CD8-positive, alpha-beta T cell (primary cell): ENCODE measurements at regions of chr18 and their contacts with region 1.

Region 1: DNA sequence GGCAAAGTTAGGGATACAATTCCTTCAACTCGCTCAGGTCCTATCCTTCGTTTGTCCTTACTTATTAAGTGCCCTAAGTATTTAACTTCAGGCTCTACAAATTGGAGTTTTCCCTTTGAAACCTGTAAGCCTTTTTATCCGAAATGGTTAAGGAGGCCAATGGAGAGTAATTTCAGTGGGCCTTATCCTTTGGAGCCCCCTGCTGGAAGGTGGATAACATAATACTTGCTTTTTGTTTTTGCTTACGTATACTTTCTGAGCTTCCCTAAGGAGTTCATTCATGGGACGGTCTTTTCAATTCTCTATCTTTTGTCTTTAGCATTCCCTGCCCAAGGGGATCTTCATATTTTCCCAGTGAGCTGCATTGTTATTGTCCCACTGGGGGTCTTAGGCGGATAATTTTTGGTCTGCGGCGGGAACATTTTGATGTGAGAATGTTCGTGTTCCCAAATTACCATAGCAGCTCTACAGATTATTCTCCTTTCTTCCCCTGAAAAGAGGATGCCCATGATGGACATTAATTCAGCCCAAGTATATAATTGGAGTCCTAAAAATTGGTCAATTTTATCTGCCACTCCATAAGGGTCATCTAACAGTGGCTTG is 34.4 kb upstream of the TRAPPC8 start:
- DNase-seq: peak in 5 of 9 experiments; percentile 15 to 65 (median 41)
- ATAC-seq: no peak
- H3K4me3 ChIP-seq: no peak overlapping the region
- H3K4me3 Mint-ChIP-seq: no peak overlapping the region
- H3K27ac ChIP-seq: no peak overlapping the region
- H3K27ac Mint-ChIP-seq: no peak overlapping the region
- H3K4me1 ChIP-seq: no peaks in the 10 kb centered on the region
- H3K4me1 Mint-ChIP-seq: peaks cover 1% of the 10 kb centered on the region
- H3K27me3 ChIP-seq: no peaks in the 10 kb centered on the region
- H3K27me3 Mint-ChIP-seq: no peaks in the 10 kb centered on the region
- CTCF ChIP-seq: peak; percentile 62

Region 2: DNA sequence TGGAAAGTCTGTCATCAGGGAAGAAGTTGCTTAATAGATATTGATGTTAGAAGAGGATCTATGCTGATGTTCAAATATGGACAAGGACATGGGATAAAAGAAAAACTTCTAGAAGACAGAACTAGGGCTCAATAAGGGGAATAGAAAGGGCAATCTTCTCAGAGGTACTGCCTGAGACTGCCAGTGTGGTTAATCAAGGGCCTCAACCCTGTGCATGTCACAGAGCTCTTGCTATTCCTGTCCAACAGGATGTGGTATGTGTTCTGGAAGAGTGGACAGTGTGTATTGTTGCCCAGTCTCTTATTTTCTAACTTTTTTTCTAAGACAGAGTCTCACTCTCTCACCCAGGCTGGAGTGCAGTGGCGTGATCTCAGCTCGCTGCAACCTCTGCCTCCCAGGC is 13.5 kb after region 1 on chr18:
- CTCF ChIA-PET with region 1: interaction called, 10 read pairs
- POLR2A ChIA-PET with region 1: no interaction called
- intact Hi-C with region 1: no loop called
- DNase-seq: no peak
- ATAC-seq: no peak
- H3K4me3 ChIP-seq: no peak overlapping the region
- H3K4me3 Mint-ChIP-seq: no peak overlapping the region
- H3K27ac ChIP-seq: no peak overlapping the region
- H3K27ac Mint-ChIP-seq: no peak overlapping the region
- H3K4me1 ChIP-seq: no peaks in the 10 kb centered on the region
- H3K4me1 Mint-ChIP-seq: no peaks in the 10 kb centered on the region
- H3K27me3 ChIP-seq: no peaks in the 10 kb centered on the region
- H3K27me3 Mint-ChIP-seq: no peaks in the 10 kb centered on the region
- CTCF ChIP-seq: no peak

Region 3: DNA sequence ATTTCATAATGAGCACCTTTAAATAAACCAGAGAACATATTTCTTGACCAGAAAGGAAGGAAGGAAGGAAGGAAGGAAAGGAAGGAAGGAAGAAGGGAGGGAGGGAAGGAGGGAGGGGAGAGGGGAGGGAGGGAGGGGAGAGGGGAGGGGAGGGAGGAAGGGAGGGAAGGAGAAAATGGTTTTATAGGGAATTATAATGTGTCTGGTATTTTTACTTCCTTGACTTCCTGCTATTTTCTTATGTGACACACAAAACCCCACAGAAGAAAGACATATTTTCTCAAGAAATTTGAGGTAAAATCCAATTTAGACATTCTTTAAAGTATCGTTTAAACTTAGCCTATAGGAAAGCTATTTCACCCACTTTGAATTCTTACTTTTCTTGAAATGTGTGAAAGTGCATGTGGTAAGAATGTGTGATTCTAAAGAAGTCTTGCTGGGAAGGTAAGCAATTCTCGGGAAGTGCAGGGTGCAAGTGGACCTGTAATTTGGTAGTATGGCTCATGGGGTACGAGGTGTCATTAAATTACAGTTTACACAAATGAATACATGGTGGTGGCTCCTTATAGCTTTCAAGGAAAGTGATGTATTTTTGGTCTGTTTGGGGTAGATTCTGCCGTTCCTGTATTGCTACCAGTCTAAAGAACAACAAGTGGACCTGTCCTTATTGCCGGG is 59.3 kb after region 1 on chr18:
- CTCF ChIA-PET with region 1: no interaction called
- POLR2A ChIA-PET with region 1: no interaction called
- intact Hi-C with region 1: no loop called
- DNase-seq: no peak
- ATAC-seq: no peak
- H3K4me3 ChIP-seq: no peak overlapping the region
- H3K4me3 Mint-ChIP-seq: no peak overlapping the region
- H3K27ac ChIP-seq: peak overlapping the region in 1 of 2 experiments; percentile 26
- H3K27ac Mint-ChIP-seq: peak overlapping the region; percentile 50
- H3K4me1 ChIP-seq: peaks cover 57% of the 10 kb centered on the region
- H3K4me1 Mint-ChIP-seq: peaks cover 79% of the 10 kb centered on the region
- H3K27me3 ChIP-seq: no peaks in the 10 kb centered on the region
- H3K27me3 Mint-ChIP-seq: no peaks in the 10 kb centered on the region
- CTCF ChIP-seq: no peak

Region 4: DNA sequence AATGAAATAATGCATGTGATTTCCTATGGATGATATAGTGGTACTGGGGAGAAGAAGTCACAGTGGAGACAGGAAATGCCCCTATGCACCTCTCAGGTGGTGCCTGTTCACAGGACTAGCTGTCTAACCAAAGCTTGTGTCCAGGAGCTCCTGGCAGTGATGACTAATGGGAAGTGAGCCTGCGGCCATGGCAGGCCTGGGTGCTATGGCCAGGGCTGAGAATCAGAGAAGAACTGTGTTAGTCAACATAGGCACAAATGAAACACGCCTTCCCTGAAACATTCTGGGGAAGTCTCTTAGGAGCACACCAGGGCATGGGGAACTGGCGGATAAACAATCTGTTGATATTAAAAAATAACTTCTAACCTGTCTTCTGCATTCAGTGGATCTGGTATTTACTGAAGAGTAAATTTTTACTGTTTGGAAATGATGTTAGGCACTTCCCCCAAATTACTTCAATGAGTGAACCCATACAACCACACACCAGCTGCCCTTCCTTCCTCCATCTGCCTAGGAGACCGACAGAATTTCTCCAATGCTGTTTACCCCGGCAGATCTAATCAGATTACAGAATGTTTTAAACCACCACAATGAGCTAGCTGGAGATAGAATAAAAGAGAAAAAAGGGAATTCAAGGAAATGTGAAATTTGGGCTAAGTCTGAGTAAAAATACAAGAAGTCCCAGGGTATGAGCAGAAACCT is 279.9 kb after region 1 on chr18:
- CTCF ChIA-PET with region 1: no interaction called
- POLR2A ChIA-PET with region 1: no interaction called
- intact Hi-C with region 1: no loop called
- DNase-seq: no peak
- ATAC-seq: no peak
- H3K4me3 ChIP-seq: no peak overlapping the region
- H3K4me3 Mint-ChIP-seq: no peak overlapping the region
- H3K27ac ChIP-seq: no peak overlapping the region
- H3K27ac Mint-ChIP-seq: no peak overlapping the region
- H3K4me1 ChIP-seq: no peaks in the 10 kb centered on the region
- H3K4me1 Mint-ChIP-seq: no peaks in the 10 kb centered on the region
- H3K27me3 ChIP-seq: peaks cover 0 to 3% of the 10 kb centered on the region in 2 experiments
- H3K27me3 Mint-ChIP-seq: peaks cover 28% of the 10 kb centered on the region
- CTCF ChIP-seq: no peak

Region 5: DNA sequence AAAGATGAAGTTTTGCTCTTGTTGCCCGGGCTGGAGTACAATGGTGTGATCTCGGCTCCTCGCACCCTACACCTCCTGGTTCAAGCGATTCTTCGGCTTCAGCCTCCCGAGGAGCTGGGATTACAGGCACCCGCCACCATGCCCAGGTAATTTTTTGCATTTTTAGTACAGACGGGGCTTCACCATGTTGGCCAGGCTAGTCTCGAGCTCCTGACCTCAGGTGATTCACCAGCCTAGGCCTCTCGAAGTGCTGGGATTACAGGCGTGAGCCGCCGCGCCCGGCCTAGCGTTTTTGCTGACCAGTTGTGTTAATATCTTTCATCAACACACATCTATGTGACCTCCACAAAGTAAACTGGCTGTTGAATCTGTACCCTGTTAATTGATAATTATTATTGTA is 844.8 kb after region 1 on chr18:
- CTCF ChIA-PET with region 1: no interaction called
- POLR2A ChIA-PET with region 1: no interaction called
- intact Hi-C with region 1: no loop called
- DNase-seq: no peak
- ATAC-seq: no peak
- H3K4me3 ChIP-seq: no peak overlapping the region
- H3K4me3 Mint-ChIP-seq: no peak overlapping the region
- H3K27ac ChIP-seq: no peak overlapping the region
- H3K27ac Mint-ChIP-seq: no peak overlapping the region
- H3K4me1 ChIP-seq: no peaks in the 10 kb centered on the region
- H3K4me1 Mint-ChIP-seq: no peaks in the 10 kb centered on the region
- H3K27me3 ChIP-seq: no peaks in the 10 kb centered on the region
- H3K27me3 Mint-ChIP-seq: no peaks in the 10 kb centered on the region
- CTCF ChIP-seq: no peak